B cell (primary cell): ENCODE measurements at regions of chr15 and their contacts with region 1.

Region 1: DNA sequence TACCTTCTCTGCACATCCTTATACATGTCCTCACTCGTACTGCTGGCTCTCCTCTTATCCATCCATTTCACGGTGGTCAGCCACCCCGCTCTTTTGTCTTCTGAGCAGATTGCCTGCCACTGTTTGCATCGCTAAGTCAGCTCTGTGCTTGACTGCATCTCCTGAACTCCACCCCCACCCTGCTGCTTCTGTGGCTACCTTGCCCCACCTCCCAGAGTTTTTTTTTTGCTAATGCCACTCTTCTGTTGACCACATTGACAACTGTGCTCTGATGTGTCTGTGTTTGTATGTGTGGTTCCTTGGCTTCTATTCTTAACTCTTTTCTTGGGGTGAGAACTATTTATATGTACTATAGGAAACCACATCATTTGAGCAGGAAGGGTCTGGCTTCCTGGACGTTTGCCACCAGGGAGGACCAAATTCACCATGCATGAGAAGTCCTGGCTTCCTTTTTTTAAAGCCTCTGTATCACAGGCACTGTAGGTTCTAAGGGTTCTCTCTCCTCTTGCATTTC is 12.8 kb upstream of the MTMR10 start:
- DNase-seq: peak; percentile 83
- ATAC-seq: peak; percentile 92
- H3K4me3 ChIP-seq: peak overlapping the region in 4 of 5 experiments; percentile 3 to 47 (median 30)
- H3K4me3 Mint-ChIP-seq: peak overlapping the region; percentile 75
- H3K27ac ChIP-seq: peak overlapping the region; percentile 28 to 55
- H3K27ac Mint-ChIP-seq: peak overlapping the region; percentile 90
- H3K4me1 ChIP-seq: peaks cover 46 to 61% of the 10 kb centered on the region in 2 donors
- H3K4me1 Mint-ChIP-seq: peaks cover 84% of the 10 kb centered on the region
- H3K27me3 ChIP-seq: no peaks in the 10 kb centered on the region
- H3K27me3 Mint-ChIP-seq: no peaks in the 10 kb centered on the region
- CTCF ChIP-seq: no peak

Region 2: DNA sequence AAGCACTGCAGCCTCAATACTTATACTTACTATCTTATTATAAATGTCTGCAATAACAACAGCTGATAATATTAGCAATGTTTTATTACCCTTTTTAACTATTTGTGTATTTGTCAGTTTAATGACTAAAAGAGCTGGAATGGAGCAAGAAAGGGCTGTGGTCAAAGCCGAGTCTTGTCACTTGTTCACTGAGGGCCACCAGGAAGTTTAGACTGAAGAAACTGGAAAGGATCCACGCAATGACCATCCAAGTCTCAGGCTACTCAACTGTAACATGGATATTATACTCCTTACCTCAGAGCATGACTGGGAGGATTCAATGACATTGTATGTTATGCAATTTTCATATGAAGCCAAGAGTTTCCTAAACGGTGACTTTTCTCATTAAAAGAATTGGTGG is 1272.4 kb before region 1 on chr15:
- CTCF ChIA-PET with region 1: no interaction called
- POLR2A ChIA-PET with region 1: no interaction called
- intact Hi-C with region 1: no loop called
- DNase-seq: no peak
- ATAC-seq: no peak
- H3K4me3 ChIP-seq: no peak overlapping the region
- H3K4me3 Mint-ChIP-seq: no peak overlapping the region
- H3K27ac ChIP-seq: no peak overlapping the region
- H3K27ac Mint-ChIP-seq: no peak overlapping the region
- H3K4me1 ChIP-seq: no peaks in the 10 kb centered on the region
- H3K4me1 Mint-ChIP-seq: no peaks in the 10 kb centered on the region
- H3K27me3 ChIP-seq: no peaks in the 10 kb centered on the region
- H3K27me3 Mint-ChIP-seq: peaks cover 3% of the 10 kb centered on the region
- CTCF ChIP-seq: no peak

Region 3: DNA sequence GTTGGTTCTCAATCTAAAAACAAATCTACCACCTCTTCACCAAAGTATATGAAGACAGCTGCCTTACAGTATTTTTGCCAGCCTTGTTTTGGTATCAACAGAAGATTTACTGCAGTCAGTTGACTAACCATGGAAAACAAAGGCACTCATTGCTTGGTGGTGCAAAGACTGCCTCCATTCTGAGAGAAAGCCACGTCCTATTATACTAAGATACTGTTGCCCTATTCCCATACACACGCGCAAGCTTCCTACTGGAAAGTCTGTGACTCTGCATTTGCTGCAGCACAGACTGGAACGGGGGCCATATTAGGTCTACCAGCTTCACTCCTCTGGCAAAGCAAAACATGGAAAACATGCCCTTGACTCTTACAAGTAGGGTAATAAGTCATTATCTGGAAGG is 30.9 kb before region 1 on chr15:
- CTCF ChIA-PET with region 1: no interaction called
- POLR2A ChIA-PET with region 1: no interaction called
- intact Hi-C with region 1: no loop called
- DNase-seq: no peak
- ATAC-seq: no peak
- H3K4me3 ChIP-seq: no peak overlapping the region
- H3K4me3 Mint-ChIP-seq: no peak overlapping the region
- H3K27ac ChIP-seq: no peak overlapping the region
- H3K27ac Mint-ChIP-seq: no peak overlapping the region
- H3K4me1 ChIP-seq: peaks cover 17 to 33% of the 10 kb centered on the region in 2 donors
- H3K4me1 Mint-ChIP-seq: peaks cover 64% of the 10 kb centered on the region
- H3K27me3 ChIP-seq: no peaks in the 10 kb centered on the region
- H3K27me3 Mint-ChIP-seq: no peaks in the 10 kb centered on the region
- CTCF ChIP-seq: no peak

Region 4: DNA sequence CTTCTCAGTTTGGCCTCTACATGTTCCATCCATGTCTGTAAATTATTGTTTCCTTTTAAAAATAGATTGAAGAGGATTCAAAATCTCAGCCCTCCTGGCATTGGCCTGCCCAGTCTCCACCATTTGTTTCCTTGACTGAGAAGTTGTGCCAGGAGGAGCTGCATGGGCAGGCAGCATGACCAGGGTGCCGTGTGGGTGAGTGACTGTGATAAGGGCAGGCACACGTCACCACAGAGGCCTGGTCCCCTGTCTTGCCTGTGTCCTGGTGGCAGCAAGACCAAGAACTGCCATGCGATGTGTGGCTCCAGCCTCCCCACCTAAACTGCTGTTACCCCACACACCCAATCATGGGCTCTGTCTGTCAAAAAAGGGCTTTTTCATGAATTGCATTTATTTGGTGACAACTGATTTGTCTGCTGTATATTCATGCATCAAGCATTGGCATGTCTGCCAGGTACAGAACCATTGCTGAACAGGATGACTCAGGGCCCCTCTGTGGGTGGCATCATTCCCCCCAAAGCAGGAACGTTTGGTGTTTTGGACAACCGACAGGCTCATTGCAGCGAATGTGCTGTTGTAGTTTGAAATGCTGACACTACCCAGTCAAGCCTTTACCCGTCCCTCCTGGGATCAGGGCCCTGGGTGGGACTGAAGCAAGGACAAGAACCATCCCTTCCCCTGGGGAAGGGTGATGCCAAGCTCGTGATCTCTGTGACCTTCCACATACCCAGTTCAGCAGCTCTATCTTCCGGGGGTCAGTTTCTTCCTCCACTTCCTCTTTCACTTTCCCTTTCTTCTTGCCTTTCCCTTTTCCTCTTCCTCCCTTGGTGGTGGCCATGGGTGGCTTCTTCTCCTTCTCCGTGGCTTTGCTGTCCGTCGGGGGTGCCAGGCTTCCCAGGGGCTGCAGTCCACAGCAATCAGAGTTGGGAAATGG is 45.7 kb after region 1 on chr15:
- CTCF ChIA-PET with region 1: no interaction called
- POLR2A ChIA-PET with region 1: interaction called, 3 read pairs
- intact Hi-C with region 1: loop called (anchors 5 kb)
- DNase-seq: peak; percentile 56
- ATAC-seq: peak; percentile 59
- H3K4me3 ChIP-seq: peak overlapping the region in 1 of 5 experiments; percentile 32
- H3K4me3 Mint-ChIP-seq: peak overlapping the region; percentile 69
- H3K27ac ChIP-seq: peak overlapping the region; percentile 74 to 87
- H3K27ac Mint-ChIP-seq: peak overlapping the region; percentile 95
- H3K4me1 ChIP-seq: peaks cover 49 to 55% of the 10 kb centered on the region in 2 donors
- H3K4me1 Mint-ChIP-seq: peaks cover 62% of the 10 kb centered on the region
- H3K27me3 ChIP-seq: no peaks in the 10 kb centered on the region
- H3K27me3 Mint-ChIP-seq: no peaks in the 10 kb centered on the region
- CTCF ChIP-seq: no peak

Region 5: DNA sequence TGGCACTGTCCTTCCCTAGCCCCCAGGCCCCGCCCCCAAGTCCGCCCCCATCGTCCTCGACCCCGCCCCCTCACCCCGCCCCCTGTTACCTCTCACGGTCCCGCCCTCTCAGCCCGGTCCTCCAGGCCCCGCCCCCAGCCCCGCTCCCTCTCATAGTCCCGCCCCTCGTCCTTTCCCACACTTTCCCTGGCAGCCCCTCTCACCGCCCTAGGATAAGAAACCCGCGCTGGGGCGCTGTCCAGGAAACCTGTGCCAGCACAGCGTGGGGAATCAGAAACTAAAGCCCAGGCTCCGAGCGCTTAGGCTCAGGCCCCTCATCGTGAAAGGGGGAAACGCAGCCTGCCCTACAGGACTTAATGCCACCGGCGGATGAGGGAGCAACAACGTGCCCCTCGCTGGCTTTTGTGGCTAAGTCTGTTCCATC is 76.3 kb after region 1 on chr15:
- CTCF ChIA-PET with region 1: no interaction called
- POLR2A ChIA-PET with region 1: no interaction called
- intact Hi-C with region 1: no loop called
- DNase-seq: peak; percentile 59
- ATAC-seq: peak; percentile 90
- H3K4me3 ChIP-seq: peak overlapping the region in 4 of 5 experiments; percentile 38 to 68 (median 64)
- H3K4me3 Mint-ChIP-seq: peak overlapping the region; percentile 80
- H3K27ac ChIP-seq: no peak overlapping the region
- H3K27ac Mint-ChIP-seq: no peak overlapping the region
- H3K4me1 ChIP-seq: peaks cover 30 to 40% of the 10 kb centered on the region in 2 donors
- H3K4me1 Mint-ChIP-seq: peaks cover 52% of the 10 kb centered on the region
- H3K27me3 ChIP-seq: peaks cover 0 to 3% (median 0%) of the 10 kb centered on the region in 4 experiments
- H3K27me3 Mint-ChIP-seq: peaks cover 5% of the 10 kb centered on the region
- CTCF ChIP-seq: no peak

Region 6: GRCh38 chr15:31228985-31229826 is 224.9 kb after region 1 on chr15:
- CTCF ChIA-PET with region 1: no interaction called
- POLR2A ChIA-PET with region 1: no interaction called
- intact Hi-C with region 1: loop called (anchors 10 kb)
- DNase-seq: peak; percentile 68
- ATAC-seq: peak; percentile 46
- H3K4me3 ChIP-seq: peak overlapping the region; percentile 19 to 63 (median 43)
- H3K4me3 Mint-ChIP-seq: peak overlapping the region; percentile 89
- H3K27ac ChIP-seq: peak overlapping the region; percentile 11 to 68
- H3K27ac Mint-ChIP-seq: peak overlapping the region; percentile 92
- H3K4me1 ChIP-seq: peaks cover 72 to 86% of the 10 kb centered on the region in 2 donors
- H3K4me1 Mint-ChIP-seq: peaks cover 86% of the 10 kb centered on the region
- H3K27me3 ChIP-seq: no peaks in the 10 kb centered on the region
- H3K27me3 Mint-ChIP-seq: no peaks in the 10 kb centered on the region
- CTCF ChIP-seq: no peak

Region 7: DNA sequence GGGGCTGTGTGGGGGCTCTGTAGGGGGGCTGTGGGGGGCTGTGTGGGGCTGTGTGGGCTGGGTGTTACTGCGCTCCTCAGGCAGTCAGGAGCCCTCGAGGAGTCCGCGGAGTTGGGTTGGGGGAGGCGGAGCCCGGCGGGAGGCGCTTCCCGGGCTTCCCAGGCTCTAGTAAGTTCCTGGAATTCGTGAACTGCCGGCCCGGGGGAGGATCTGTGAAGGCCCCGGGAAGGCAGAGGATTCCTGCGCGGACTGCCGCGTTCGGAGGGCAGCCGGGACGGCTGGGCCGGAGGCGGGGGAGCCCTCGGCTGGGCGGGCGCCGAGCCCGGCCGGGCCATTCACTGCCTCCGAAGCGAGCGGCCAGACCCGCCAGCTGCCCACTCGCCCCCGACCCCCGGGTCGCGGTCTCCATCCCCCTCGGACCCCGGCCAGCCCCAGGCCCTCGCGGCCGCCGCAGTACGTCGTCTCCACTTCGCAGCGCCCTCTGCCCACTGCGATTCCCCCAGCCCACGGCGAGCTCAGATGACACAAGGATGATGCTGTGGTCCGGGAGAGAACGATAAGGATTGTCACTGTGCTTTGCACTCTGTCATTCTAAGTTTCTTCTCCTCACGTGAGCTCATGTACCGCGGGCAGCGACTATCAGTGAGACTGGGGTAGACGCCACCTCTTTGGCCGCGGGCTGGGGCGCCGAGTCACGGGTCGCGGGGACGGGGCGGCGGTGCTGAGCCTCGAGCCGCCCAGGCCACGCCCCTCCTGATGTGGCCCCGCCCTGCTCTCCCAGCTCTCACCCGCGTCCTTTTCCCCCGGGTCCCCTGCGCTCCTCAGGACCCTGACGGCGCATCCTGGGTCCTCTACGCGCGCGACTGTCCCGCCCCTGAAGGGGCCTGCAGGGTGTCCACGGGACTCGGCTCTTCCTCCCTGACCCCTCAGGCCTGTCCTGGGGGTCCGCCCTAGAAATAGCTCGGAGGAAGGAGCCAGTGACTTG is 387.7 kb after region 1 on chr15:
- CTCF ChIA-PET with region 1: no interaction called
- POLR2A ChIA-PET with region 1: no interaction called
- intact Hi-C with region 1: no loop called
- DNase-seq: peak; percentile 86
- ATAC-seq: peak; percentile 92
- H3K4me3 ChIP-seq: peak overlapping the region; percentile 22 to 90 (median 82)
- H3K4me3 Mint-ChIP-seq: peak overlapping the region; percentile 94
- H3K27ac ChIP-seq: peak overlapping the region; percentile 48 to 52
- H3K27ac Mint-ChIP-seq: peak overlapping the region; percentile 89
- H3K4me1 ChIP-seq: peaks cover 3 to 13% of the 10 kb centered on the region in 2 donors
- H3K4me1 Mint-ChIP-seq: peaks cover 17% of the 10 kb centered on the region
- H3K27me3 ChIP-seq: no peaks in the 10 kb centered on the region
- H3K27me3 Mint-ChIP-seq: no peaks in the 10 kb centered on the region
- CTCF ChIP-seq: no peak